PC-3 (cell line): ENCODE measurements at regions of chr1 and their contacts with region 1.

Region 1: DNA sequence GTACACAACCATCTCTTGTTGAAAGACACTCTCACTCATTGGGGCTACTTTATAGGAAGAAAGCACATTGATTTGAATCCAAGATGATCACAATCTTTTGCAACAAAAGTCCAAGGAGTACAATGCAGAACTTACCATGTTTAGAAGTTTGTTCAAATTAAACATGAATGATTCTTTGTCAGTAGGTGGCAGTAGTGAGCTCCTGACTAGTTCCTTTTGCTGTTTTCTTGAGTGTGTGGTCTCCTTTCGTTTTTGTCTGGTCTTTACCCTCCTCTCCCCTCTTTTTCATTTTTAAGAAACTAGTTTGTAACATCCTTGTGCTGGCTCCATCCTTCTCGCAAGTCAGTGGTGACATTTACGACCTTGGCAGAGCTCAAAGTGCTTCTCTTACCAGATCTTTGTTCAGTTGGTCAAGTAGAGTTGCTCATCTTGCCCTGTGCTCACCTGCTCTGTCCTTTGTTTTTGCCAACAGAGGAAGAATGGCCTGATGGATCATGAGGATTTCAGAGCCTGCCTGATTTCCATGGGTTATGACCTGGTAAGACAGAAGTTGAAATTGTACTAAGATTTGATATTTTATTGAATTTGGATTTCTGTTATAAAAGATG is 35.7 kb upstream of the MTR start:
- DNase-seq: peak; percentile 51
- ATAC-seq: no peak
- H3K4me3 ChIP-seq: 0 out of 2 replicates have a peak overlapping the region, but pooled peaks have one; percentile 11
- H3K27ac ChIP-seq: no peak overlapping the region
- H3K4me1 ChIP-seq: no peaks in the 10 kb centered on the region
- H3K27me3 ChIP-seq: peaks cover 32% of the 10 kb centered on the region
- CTCF ChIP-seq: peak; percentile 67

Region 2: DNA sequence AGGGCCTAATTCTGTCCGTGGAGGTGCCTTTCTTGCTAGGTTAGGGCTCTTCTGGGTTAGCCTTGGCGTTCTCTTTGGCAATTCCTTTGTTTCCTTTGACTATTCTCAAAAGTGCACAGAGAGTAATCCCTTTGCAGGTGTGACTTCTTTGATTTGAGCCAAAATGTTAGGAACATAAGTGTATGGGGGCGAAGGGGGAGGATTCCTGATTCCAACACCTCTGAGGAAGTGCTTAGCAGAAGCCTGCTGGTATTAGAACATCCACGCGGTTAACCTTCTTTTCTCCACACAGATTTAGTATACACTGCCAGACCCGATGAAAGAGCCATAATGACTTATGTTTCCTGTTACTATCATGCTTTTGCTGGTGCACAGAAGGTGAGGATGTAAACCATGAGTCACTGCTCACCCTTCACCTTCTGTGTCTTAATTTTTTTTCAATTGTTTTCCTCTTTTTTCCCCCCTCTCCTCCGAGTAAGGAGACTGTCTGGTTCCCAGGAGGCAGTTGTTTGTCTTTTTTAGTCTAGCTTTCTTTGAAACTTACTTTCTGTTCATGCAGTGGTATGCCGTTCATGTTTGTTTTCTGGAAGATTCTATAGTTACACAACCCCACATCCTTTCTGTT is 25.1 kb before region 1 on chr1:
- CTCF ChIA-PET with region 1: no interaction called
- POLR2A ChIA-PET with region 1: no interaction called
- intact Hi-C with region 1: no loop called
- DNase-seq: no peak
- ATAC-seq: no peak
- H3K4me3 ChIP-seq: no peak overlapping the region
- H3K27ac ChIP-seq: no peak overlapping the region
- H3K4me1 ChIP-seq: no peaks in the 10 kb centered on the region
- H3K27me3 ChIP-seq: peaks cover 72% of the 10 kb centered on the region
- CTCF ChIP-seq: no peak

Region 3: DNA sequence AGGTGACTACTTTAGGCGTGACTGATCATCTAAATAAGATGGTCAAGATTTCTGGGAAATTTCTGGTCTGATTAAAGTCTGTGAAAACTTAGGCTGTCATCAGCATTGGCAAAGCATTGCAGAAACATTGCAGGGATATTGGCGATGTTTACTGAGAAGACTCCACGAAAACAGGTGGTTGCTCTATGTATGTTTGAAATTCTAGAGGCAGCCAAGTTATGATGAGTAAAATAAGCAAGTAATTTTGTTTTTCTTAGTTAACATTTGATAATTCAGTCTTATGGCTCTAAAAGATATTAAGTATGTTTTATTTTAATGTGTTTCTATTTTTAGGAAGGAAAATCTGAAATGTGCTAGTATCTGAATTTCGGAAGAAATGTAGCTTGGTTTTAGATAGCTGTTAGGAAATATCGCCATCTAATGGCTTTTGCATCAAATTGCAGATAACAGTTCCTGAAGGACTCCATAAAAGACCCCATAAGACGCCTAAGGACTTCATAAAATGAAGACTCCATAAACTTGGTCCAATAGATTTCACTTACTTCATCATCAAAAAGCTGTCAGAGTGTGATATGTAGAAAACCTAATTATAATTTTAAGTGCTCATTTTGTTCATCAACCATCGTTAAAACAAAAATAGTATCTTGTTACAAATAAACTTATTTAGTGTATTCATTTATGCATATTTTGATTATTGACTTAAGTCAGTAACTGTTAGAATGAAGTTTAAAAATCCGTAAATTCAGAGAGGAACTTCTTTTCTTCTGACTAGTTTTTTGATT is 627.2 kb after region 1 on chr1:
- CTCF ChIA-PET with region 1: no interaction called
- POLR2A ChIA-PET with region 1: no interaction called
- intact Hi-C with region 1: loop called (anchors 2 kb)
- DNase-seq: peak; percentile 25
- ATAC-seq: no peak
- H3K4me3 ChIP-seq: no peak overlapping the region
- H3K27ac ChIP-seq: no peak overlapping the region
- H3K4me1 ChIP-seq: no peaks in the 10 kb centered on the region
- H3K27me3 ChIP-seq: peaks cover 17% of the 10 kb centered on the region
- CTCF ChIP-seq: peak; percentile 66

Region 4: GRCh38 chr1:237562242-237562823 is 803.0 kb after region 1 on chr1:
- CTCF ChIA-PET with region 1: no interaction called
- POLR2A ChIA-PET with region 1: no interaction called
- intact Hi-C with region 1: loop called (anchors 10 kb)
- DNase-seq: peak; percentile 84
- ATAC-seq: peak; percentile 80
- H3K4me3 ChIP-seq: no peak overlapping the region
- H3K27ac ChIP-seq: no peak overlapping the region
- H3K4me1 ChIP-seq: no peaks in the 10 kb centered on the region
- H3K27me3 ChIP-seq: peaks cover 23% of the 10 kb centered on the region; the same call in 1 of the 2 replicates
- CTCF ChIP-seq: peak; percentile 64